Heart right ventricle (tissue), 16 donors: ENCODE measurements at regions of chr6 and their contacts with region 1.

Region 1: GRCh38 chr6:7615611-7616383 is 25.8 kb downstream of the SNRNP48 start:
- DNase-seq: peak in 1 of 2 donors; percentile 54
- ATAC-seq: peak; percentile 32 to 75 (median 56)
- H3K4me3 ChIP-seq: peak overlapping the region in 5 of 10 donors; percentile 17 to 33 (median 21)
- H3K27ac ChIP-seq: no peak overlapping the region
- H3K4me1 ChIP-seq: peaks cover 0 to 29% (median 8%) of the 10 kb centered on the region in 9 donors
- H3K27me3 ChIP-seq: no peaks in the 10 kb centered on the region
- CTCF ChIP-seq: peak; percentile 63 to 82 (median 74)

Region 2: DNA sequence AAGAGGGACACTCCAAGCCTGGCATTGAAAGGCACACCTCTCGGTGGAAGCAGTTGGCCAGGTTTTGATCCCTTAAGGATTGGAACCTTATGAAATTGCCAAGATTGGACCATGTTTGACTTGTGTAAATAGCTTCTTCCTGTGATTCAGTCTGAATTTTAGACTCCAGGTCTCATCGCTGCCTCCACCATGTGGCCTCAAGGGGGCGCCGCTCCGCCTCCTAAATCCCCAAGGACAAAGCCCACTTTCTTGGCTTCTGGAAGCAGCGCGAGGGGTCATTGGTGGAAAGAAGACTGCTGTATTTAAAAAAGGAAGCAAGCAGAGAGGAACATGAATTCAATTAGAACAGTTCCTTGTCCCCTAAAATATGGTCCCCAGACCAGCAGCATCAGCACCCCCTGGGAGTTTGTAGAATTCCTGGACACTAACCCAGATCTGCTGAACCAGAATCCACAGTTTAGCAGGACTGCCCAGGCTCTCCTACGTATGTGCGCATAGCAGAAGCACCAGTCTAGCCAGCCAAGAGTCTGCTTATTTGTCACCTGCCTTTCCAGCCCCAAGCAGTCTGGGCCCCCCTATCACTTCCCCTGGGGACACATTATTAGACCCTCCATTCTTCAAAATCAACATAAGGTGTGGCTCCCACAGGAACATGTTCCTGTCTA is 918.8 kb before region 1 on chr6:
- intact Hi-C with region 1: loop called in 1 of 10 experiments (anchors 10 kb)
- DNase-seq: peak; percentile 56 to 65
- ATAC-seq: peak in 2 of 8 donors; percentile 23 to 32
- H3K4me3 ChIP-seq: no peak overlapping the region
- H3K27ac ChIP-seq: peak overlapping the region in 8 of 10 donors; percentile 67 to 88 (median 77)
- H3K4me1 ChIP-seq: peaks cover 18 to 63% (median 52%) of the 10 kb centered on the region in 9 donors
- H3K27me3 ChIP-seq: no peaks in the 10 kb centered on the region
- CTCF ChIP-seq: peak; percentile 56 to 83 (median 77)

Region 3: GRCh38 chr6:7276199-7276524 is 339.6 kb before region 1 on chr6:
- intact Hi-C with region 1: loop called (anchors 2 to 10 kb)
- DNase-seq: no peak
- ATAC-seq: peak in 1 of 8 donors; percentile 7
- H3K4me3 ChIP-seq: no peak overlapping the region
- H3K27ac ChIP-seq: no peak overlapping the region
- H3K4me1 ChIP-seq: peaks cover 0 to 17% (median 0%) of the 10 kb centered on the region in 9 donors
- H3K27me3 ChIP-seq: no peaks in the 10 kb centered on the region
- CTCF ChIP-seq: peak in 2 of 9 donors; percentile 6 to 14

Region 4: GRCh38 chr6:7389451-7390225 is 226.2 kb before region 1 on chr6 and contains the starts of genes CAGE1 and RIOK1:
- intact Hi-C with region 1: loop called in 1 of 10 experiments (anchors 10 kb)
- DNase-seq: peak; percentile 95
- ATAC-seq: peak; percentile 99 to 100 (median 100)
- H3K4me3 ChIP-seq: peak within 1 kb of the TSS; percentile 68 to 90 (median 80)
- H3K27ac ChIP-seq: peak within 1 kb of the TSS; percentile 49 to 95 (median 90)
- H3K4me1 ChIP-seq: peaks cover 3 to 28% (median 22%) of the 10 kb centered on the region in 9 donors
- H3K27me3 ChIP-seq: no peaks in the 10 kb centered on the region
- CTCF ChIP-seq: peak in 5 of 9 donors; percentile 15 to 39 (median 31)
- total RNA-seq, gene CAGE1: 0.08 to 0.32 TPM in 2 of 10 donors, not detected in the others
- total RNA-seq, gene RIOK1: 7.0 to 13.4 (median 11.0) TPM